K562 (cell line): ENCODE measurements at regions of chr22 and their contacts with region 1.

Region 1: GRCh38 chr22:35399678-35400334 is at the start of gene MCM5:
- DNase-seq: peak; percentile 95 to 98 (median 96)
- ATAC-seq: peak; percentile 98
- H3K4me3 ChIP-seq: peak within 1 kb of the TSS; percentile 92
- H3K27ac ChIP-seq: peak within 1 kb of the TSS; percentile 97
- H3K4me1 ChIP-seq: peaks cover 9 to 30% of the 10 kb centered on the region in 2 experiments; a peak in 4 of 5 replicates
- H3K27me3 ChIP-seq: no peaks in the 10 kb centered on the region
- CTCF ChIP-seq: no peak
- EP300 ChIP-seq: no peak
- POLR2A ChIP-seq: peak; percentile 86
- RAD21 ChIP-seq: no peak
- polyA plus RNA-seq, gene MCM5: 5.6 to 11.8 TPM

Region 2: DNA sequence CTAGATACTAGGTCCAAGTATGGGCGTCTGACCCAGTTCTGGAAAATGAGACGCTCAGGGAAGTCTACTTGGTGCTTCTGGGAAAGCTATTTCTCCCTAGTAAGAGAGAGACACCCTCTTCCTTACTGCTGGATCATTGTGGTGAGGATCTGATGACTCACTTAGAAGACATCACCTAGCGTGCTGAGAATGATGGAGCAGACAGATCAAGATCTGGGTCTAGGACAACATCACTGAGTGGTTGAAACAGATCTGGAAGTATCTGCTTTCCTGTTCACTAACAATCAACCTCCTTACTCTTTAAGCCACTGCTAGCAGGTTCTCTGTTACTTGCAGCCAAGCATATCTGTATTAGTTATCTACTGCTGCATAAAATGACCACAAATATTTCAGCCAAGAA is 180.8 kb before region 1 on chr22:
- CTCF ChIA-PET with region 1: no interaction called
- POLR2A ChIA-PET with region 1: no interaction called
- in situ Hi-C with region 1: no loop called
- intact Hi-C with region 1: no loop called
- DNase-seq: peak; percentile 49 to 57 (median 55)
- ATAC-seq: peak; percentile 78
- H3K4me3 ChIP-seq: no peak overlapping the region
- H3K27ac ChIP-seq: 0 out of 3 replicates have a peak overlapping the region, but pooled peaks have one; percentile 54
- H3K4me1 ChIP-seq: peaks cover 0 to 27% of the 10 kb centered on the region in 2 experiments; a peak in 4 of 5 replicates
- H3K27me3 ChIP-seq: no peaks in the 10 kb centered on the region
- CTCF ChIP-seq: no peak
- EP300 ChIP-seq: no peak; the same call in 1 of the 2 replicates
- POLR2A ChIP-seq: no peak
- RAD21 ChIP-seq: no peak

Region 3: GRCh38 chr22:35350539-35351503 is 49.0 kb before region 1 on chr22:
- CTCF ChIA-PET with region 1: no interaction called
- POLR2A ChIA-PET with region 1: interaction called, 3 read pairs
- in situ Hi-C with region 1: no loop called
- intact Hi-C with region 1: loop called (anchors 10 kb)
- DNase-seq: peak; percentile 87 to 94 (median 92)
- ATAC-seq: peak; percentile 99
- H3K4me3 ChIP-seq: peak overlapping the region; percentile 45
- H3K27ac ChIP-seq: no peak overlapping the region
- H3K4me1 ChIP-seq: peaks cover 5 to 23% of the 10 kb centered on the region in 2 experiments; a peak in 4 of 5 replicates
- H3K27me3 ChIP-seq: no peaks in the 10 kb centered on the region
- CTCF ChIP-seq: peak; percentile 76 to 82 (median 79)
- EP300 ChIP-seq: no peak
- POLR2A ChIP-seq: no peak
- RAD21 ChIP-seq: peak; percentile 85 to 87

Region 4: GRCh38 chr22:35372719-35373031 is 27.1 kb before region 1 on chr22:
- CTCF ChIA-PET with region 1: no interaction called
- POLR2A ChIA-PET with region 1: interaction called, 10 read pairs
- in situ Hi-C with region 1: no loop called
- intact Hi-C with region 1: no loop called
- DNase-seq: peak in 1 of 4 experiments; percentile 37
- ATAC-seq: peak; percentile 66
- H3K4me3 ChIP-seq: no peak overlapping the region
- H3K27ac ChIP-seq: peak overlapping the region; percentile 88; the same call in 1 of the 3 replicates
- H3K4me1 ChIP-seq: peaks cover 13 to 25% of the 10 kb centered on the region in 2 experiments
- H3K27me3 ChIP-seq: no peaks in the 10 kb centered on the region
- CTCF ChIP-seq: no peak
- EP300 ChIP-seq: no peak
- POLR2A ChIP-seq: no peak
- RAD21 ChIP-seq: no peak

Region 5: DNA sequence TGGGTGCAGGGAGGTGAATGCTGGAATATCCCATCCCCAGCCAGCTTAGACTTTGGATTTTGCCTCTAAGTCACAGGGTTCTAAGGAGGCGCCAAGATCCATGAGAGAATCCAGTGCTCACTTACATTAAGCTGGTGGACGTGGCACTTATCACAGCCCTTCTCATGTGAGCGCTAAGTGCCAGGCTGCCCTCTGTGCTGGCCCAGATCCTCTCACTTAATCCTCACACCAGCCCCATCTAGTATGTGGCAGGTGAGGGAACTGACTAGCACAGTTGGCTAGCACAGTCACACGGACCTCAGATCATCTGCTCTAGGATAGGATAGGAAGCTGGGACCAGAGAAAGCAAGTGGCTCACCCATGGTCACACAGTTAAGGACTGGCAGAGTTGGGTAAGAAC is 15.3 kb before region 1 on chr22:
- CTCF ChIA-PET with region 1: no interaction called
- POLR2A ChIA-PET with region 1: interaction called, 14 read pairs
- in situ Hi-C with region 1: no loop called
- intact Hi-C with region 1: no loop called
- DNase-seq: no peak
- ATAC-seq: peak; percentile 58
- H3K4me3 ChIP-seq: no peak overlapping the region
- H3K27ac ChIP-seq: no peak overlapping the region
- H3K4me1 ChIP-seq: peaks cover 0 to 13% of the 10 kb centered on the region in 2 experiments; a peak in 3 of 5 replicates
- H3K27me3 ChIP-seq: no peaks in the 10 kb centered on the region
- CTCF ChIP-seq: no peak
- EP300 ChIP-seq: no peak
- POLR2A ChIP-seq: no peak
- RAD21 ChIP-seq: no peak

Region 6: DNA sequence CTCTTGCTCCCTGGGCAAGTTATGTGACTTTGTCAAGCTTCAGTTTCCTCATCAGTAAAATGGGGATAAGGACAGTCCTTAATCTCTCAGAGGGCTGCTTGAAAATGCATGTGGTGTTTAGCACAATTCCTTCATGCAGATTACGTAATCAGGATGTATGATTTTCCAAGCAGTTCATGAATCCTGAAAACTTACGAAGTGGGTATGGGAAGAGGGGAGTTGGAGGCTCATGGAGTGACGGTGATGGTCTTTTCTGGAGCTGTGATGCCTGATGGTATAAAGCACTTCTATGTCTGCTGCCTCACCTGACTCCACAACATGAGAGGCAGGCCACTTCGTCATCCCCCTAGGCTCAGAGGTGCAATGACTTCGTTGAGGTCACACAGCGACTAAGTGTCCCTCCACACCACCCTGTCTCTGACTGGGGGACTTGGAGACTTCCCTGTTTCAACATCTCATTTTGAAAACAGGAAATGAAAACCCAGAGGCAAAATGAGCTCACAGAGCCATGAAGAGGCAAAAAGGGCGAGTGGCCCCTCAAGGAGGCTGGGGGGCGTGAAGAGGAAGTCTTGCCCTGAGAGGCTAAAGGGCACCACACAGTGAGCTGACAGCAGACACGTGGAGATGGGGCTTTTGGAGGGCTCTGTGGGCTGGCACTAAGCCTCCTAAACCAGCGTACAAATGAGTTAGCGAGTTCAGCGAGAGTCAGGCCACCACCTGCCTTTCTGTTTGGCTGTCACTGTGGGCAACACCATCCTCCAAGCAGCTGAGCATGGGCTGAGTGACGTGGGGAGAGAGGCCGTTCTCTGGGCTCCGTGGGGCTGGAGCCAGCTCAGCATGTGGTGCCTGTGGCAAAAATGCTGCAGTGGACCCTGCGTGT is 10.2 kb after region 1 on chr22:
- CTCF ChIA-PET with region 1: no interaction called
- POLR2A ChIA-PET with region 1: interaction called, 21 read pairs
- in situ Hi-C with region 1: no loop called
- intact Hi-C with region 1: no loop called
- DNase-seq: no peak
- ATAC-seq: no peak
- H3K4me3 ChIP-seq: no peak overlapping the region
- H3K27ac ChIP-seq: no peak overlapping the region
- H3K4me1 ChIP-seq: peaks cover 0 to 3% of the 10 kb centered on the region in 2 experiments; a peak in 2 of 5 replicates
- H3K27me3 ChIP-seq: no peaks in the 10 kb centered on the region
- CTCF ChIP-seq: no peak
- EP300 ChIP-seq: no peak
- POLR2A ChIP-seq: no peak
- RAD21 ChIP-seq: no peak

Region 7: DNA sequence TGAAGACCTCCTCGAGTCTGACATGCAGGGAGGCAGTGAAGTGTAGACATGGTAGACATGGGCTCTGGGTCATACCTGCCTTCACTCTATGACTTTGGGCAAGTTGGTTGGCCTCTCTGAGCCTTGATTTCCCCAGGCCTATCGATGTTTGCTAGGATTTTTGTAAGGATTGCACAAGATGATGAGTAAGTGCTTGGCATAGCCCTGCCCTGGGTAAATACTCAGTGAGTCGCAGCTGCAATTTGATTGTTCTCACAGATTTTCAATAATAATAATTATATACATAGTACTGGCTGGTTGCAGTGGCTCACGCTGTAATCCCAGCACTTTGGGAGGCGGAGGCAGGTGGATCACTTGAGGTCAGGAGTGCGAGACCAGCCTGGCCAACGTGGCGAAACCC is 18.3 kb after region 1 on chr22:
- CTCF ChIA-PET with region 1: no interaction called
- POLR2A ChIA-PET with region 1: interaction called, 11 read pairs
- in situ Hi-C with region 1: no loop called
- intact Hi-C with region 1: no loop called
- DNase-seq: no peak
- ATAC-seq: no peak
- H3K4me3 ChIP-seq: no peak overlapping the region
- H3K27ac ChIP-seq: no peak overlapping the region
- H3K4me1 ChIP-seq: no peaks in the 10 kb centered on the region
- H3K27me3 ChIP-seq: no peaks in the 10 kb centered on the region
- CTCF ChIP-seq: no peak
- EP300 ChIP-seq: no peak
- POLR2A ChIP-seq: no peak
- RAD21 ChIP-seq: no peak